ENCODE measurements at regions of chr3 and their contacts with region 1.

Region 1: DNA sequence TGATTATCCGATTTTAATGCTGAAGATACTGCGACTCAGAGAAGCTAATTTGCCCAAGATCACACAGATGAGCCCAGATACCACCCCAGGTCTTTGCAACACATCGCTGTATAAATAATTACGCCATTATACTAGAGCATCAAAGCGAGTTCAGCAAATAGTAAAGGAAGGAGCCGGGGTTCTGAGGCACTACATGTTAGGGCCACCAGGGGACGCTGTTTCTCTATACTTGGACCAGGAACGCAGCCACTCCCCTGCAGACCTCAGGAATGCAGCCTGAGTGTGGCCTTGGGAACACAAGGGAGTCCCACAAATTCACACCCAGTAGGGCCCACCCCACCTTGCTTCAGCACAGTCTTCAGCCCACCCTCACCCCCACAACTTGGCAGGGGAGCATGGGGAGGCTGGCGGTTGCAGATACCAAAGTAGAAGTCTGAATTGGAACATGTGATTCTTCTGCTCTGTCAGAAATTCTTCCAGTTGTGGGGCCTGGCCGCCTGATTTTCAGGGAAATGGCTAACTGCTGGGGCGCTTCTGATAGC is 57.8 kb upstream of the RYK start:
- DNase-seq: peak; percentile 83
- ATAC-seq: peak; percentile 60 to 83
- H3K4me3 ChIP-seq: no peak overlapping the region
- H3K27ac ChIP-seq: peak overlapping the region; percentile 96
- H3K4me1 ChIP-seq: peaks cover 46% of the 10 kb centered on the region
- H3K27me3 ChIP-seq: peaks cover 3% of the 10 kb centered on the region
- CTCF ChIP-seq: peak; percentile 96

Region 2: GRCh38 chr3:133943639-133944141 is 364.7 kb before region 1 on chr3:
- intact Hi-C with region 1: no loop called
- DNase-seq: no peak
- ATAC-seq: peak; percentile 46 to 47
- H3K4me3 ChIP-seq: no peak overlapping the region
- H3K27ac ChIP-seq: peak overlapping the region; percentile 84
- H3K4me1 ChIP-seq: peaks cover 65% of the 10 kb centered on the region
- H3K27me3 ChIP-seq: no peaks in the 10 kb centered on the region
- CTCF ChIP-seq: no peak

Region 3: GRCh38 chr3:134364061-134364935 is 55.9 kb after region 1 on chr3:
- intact Hi-C with region 1: loop called (anchors 10 kb)
- DNase-seq: peak; percentile 94
- ATAC-seq: peak; percentile 92 to 97
- H3K4me3 ChIP-seq: peak overlapping the region; percentile 45
- H3K27ac ChIP-seq: peak overlapping the region; percentile 86
- H3K4me1 ChIP-seq: peaks cover 99% of the 10 kb centered on the region
- H3K27me3 ChIP-seq: peaks cover 7% of the 10 kb centered on the region
- CTCF ChIP-seq: no peak

Region 4: GRCh38 chr3:134473868-134474546 is 165.6 kb after region 1 on chr3:
- intact Hi-C with region 1: loop called (anchors 5 kb)
- DNase-seq: no peak
- ATAC-seq: peak; percentile 74 to 78
- H3K4me3 ChIP-seq: no peak overlapping the region
- H3K27ac ChIP-seq: no peak overlapping the region
- H3K4me1 ChIP-seq: peaks cover 32% of the 10 kb centered on the region
- H3K27me3 ChIP-seq: no peaks in the 10 kb centered on the region
- CTCF ChIP-seq: peak; percentile 81

Measured in lower lobe of right lung (tissue), 2 donors.